Ovary (tissue), 10 donors: ENCODE measurements at regions of chr15 and their contacts with region 1.

Region 1: GRCh38 chr15:48936666-48937065 is 27.1 kb downstream of the SHC4 start:
- DNase-seq: no peak
- H3K4me3 ChIP-seq: no peak overlapping the region
- H3K27ac ChIP-seq: no peak overlapping the region
- H3K4me1 ChIP-seq: no peaks in the 10 kb centered on the region
- H3K27me3 ChIP-seq: no peaks in the 10 kb centered on the region
- CTCF ChIP-seq: no peak
- EP300 ChIP-seq: no peak
- POLR2A ChIP-seq: no peak

Region 2: GRCh38 chr15:48954538-48954937 is 17.9 kb after region 1 on chr15:
- intact Hi-C with region 1: loop called in 1 of 4 experiments (anchors 2 kb)
- DNase-seq: no peak
- H3K4me3 ChIP-seq: no peak overlapping the region
- H3K27ac ChIP-seq: no peak overlapping the region
- H3K4me1 ChIP-seq: no peaks in the 10 kb centered on the region
- H3K27me3 ChIP-seq: no peaks in the 10 kb centered on the region
- CTCF ChIP-seq: no peak
- EP300 ChIP-seq: no peak
- POLR2A ChIP-seq: no peak